G401 (cell line): ENCODE measurements at regions of chr12 and their contacts with region 1.

Region 1: DNA sequence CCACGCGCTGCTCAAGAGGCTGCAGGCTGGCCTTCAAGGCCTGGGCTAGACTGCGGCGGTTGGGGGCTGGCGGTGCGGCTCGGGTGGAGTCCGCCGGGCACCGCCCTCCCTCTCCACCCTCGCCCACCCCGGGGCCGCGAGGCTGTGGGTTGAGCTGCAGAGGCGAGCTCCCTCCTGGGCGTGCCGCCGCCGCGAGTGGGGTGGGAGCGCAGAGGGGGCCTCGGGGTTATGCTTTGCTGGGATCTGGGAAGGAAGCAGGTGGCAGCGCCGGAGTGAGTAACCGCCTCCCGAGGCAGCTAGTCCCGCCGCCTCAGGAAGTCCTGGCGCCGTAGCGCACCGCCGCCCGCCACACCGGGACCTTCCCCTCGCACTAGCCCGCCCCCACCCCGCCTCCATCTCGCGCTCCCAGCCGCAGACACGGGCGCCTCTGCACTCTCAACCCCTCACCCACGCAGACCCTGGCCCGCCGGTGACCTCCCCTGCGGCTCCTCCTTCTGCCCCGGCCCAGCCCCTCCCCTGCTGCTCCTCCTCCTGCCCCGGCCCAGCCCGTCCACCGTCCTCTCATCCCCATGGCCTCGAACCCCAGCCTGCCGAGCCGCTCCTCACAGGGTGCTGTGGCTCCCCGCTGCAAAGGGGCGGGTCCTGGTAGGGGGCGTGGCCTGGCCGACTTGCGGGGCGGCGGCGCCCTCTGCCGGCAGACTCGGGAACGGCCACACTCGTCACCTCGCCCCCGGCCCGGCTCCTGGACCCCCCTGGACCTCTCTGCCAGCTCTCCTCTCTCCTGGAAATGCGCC is 16.6 kb downstream of the TAMALIN start:
- DNase-seq: peak; percentile 49

Region 2: DNA sequence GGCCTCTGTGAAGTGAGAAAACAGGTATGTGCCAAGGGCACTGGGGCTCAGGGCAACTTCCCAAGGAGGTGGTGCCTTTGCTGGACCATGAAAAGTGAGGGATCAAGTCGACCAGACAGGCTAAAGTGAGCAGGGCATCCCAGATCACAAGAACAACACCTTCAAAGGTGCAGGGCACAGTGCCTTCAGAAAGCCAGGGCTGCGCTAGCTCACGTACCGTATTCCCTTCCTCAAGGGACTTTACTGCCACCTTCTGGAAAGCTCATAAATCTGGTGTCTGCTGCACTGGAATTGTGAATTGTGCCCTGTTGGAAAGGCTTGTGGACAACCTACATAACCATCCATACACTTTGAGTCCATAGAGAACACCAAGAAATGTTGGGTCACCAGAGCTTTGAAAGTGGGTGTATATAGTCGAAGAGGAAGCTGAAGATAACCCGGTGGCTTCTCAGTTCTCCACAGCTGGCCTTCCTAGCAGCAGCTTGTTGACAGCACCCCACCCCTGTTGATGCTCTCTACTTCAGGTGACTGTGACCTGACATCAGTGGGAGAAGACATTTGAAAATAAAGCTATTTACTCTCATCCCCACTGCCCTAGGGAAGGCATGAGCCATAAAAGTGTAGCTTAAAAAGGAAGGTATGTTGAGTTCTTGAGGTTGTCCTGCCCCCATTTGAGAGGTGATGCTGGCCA is 199.4 kb before region 1 on chr12:
- in situ Hi-C with region 1: no loop called
- DNase-seq: peak; percentile 92

Region 3: DNA sequence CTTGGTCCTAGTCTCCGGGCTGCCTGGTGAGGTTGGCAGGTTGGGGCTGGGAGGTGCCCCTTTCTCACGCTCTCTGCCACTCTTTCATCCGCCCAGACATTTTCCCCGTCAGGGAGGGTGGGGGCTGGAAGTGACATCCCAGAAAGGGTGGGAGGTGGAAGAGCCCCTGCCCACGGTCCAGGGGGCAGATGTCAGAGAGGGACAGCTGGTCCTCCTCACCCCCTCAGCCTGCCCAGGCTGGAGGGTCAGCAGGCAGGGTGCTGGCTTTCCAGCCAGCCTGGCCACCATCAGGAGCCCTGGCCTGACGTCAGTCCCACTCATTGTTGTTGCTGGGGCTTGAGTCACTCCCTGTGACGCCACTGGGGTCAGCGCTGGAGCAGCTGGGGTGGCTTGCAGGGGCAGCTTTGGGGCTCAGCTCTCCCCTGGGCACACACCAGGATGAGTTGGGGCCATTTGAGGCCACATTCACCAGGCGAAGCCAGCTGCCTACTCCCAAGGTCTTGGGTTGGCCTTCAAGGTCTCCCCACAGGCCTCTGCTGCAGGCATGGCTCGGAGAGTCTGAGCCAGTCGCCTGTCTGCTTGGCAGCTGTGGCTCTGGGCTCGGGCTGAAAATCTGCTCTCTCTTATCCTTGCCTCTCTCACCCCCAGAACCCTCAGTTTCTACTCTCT is 40.7 kb after region 1 on chr12:
- in situ Hi-C with region 1: no loop called
- DNase-seq: no peak

Region 4: GRCh38 chr12:52091869-52092268 is 68.5 kb after region 1 on chr12:
- in situ Hi-C with region 1: loop called (anchors 5 kb)
- DNase-seq: no peak

Region 5: DNA sequence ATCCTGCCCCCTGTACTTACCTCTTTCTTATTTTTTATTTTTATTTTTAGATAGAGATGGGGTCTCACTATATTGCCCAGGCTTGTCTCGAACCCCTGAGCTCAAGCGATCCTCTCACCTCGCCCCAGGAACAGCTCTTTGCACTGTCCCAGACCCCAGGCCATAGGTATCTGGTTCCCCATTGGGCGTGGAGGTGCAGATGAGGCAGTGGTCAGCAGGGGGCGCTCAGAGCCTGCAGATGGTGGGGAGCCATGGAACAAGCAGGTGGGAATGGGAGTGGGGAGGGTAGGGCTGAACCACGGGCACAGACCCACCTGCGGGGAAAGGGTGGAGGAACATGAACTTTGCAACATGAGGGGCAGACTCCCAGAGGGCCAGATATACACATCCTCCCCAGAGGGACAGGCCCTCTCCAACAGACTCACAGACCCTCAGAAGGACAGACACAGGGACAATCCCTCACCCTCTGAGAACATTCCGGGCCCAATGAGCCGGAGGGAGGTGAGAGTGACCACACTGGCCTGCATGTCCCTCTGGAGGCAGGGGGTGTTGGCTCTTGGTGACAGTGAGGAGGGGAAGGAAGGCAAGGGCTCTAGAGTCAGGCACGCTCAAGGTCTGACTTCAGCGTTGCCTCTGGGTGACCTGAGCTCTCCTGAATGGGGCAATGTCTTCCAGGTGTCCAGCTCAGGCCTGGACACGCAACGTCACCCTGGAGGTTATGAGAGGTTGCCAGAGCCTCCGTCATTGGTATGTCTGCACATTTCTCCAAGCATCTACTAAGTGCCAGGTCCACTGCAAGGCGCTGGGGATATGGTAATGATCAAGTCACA is 133.6 kb after region 1 on chr12:
- in situ Hi-C with region 1: no loop called
- DNase-seq: peak; percentile 74

Region 6: GRCh38 chr12:52213512-52214420 is 190.4 kb after region 1 on chr12:
- in situ Hi-C with region 1: no loop called
- DNase-seq: peak; percentile 40